AG04450 (cell line): ENCODE measurements at regions of chr1 and their contacts with region 1.

Region 1: DNA sequence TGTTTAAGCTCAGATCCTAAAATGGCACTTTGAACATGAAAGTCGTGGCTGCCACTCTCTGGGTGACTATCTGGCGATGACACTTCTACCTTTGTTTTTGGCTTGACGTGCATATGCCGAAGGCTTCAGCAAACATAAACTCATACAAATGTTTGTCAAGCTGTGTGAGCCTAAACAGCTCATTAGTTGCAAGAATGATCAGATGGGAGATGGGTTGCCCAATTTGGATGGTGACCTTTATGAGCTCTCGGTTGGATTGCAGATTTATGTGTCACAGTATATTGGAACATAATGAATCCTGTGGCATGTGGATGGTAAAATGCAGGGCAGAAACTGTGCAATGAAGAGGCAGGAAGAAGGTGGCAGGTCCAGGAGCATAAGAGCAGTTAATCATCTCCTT is 229.3 kb downstream of the DISC1 start:
- DNase-seq: no peak
- H3K4me3 ChIP-seq: no peak overlapping the region
- H3K27ac ChIP-seq: no peak overlapping the region
- H3K27me3 ChIP-seq: no peaks in the 10 kb centered on the region
- CTCF ChIP-seq: no peak

Region 2: DNA sequence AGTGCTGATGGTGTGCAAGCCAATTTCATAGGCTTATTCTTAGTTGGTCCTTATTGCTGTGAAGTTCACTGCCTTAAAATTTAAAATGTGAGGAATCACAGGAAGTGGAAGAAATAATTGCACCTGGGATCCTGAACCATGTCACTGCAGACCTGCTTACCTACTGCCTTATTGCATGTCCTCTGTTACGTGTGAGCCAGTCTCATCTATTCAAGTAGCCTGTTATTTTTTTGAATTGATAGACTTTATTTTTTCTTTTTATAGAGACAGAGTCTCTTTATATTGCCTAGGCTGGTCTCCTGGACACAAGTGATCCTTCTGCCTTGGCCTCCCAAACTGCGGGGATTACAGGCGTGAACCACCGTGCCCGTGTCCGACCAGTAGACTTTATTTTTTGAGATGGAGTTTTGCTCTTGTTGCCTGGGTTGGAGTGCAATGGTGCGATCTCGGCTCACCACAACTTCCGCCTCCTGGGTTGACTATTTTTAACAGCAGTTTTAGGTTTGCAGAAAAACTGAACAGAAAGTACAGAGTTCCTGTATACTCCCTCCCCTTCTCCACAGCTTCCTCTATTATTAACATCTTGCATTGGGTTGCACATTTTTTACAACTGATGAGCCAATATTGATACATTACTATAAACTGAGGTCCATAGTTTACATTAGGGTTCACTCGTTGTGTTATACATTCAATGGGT is 243.4 kb before region 1 on chr1:
- CTCF ChIA-PET with region 1: no interaction called
- POLR2A ChIA-PET with region 1: no interaction called
- DNase-seq: no peak
- H3K4me3 ChIP-seq: no peak overlapping the region
- H3K27ac ChIP-seq: no peak overlapping the region
- H3K27me3 ChIP-seq: peaks cover 3% of the 10 kb centered on the region
- CTCF ChIP-seq: no peak

Region 3: DNA sequence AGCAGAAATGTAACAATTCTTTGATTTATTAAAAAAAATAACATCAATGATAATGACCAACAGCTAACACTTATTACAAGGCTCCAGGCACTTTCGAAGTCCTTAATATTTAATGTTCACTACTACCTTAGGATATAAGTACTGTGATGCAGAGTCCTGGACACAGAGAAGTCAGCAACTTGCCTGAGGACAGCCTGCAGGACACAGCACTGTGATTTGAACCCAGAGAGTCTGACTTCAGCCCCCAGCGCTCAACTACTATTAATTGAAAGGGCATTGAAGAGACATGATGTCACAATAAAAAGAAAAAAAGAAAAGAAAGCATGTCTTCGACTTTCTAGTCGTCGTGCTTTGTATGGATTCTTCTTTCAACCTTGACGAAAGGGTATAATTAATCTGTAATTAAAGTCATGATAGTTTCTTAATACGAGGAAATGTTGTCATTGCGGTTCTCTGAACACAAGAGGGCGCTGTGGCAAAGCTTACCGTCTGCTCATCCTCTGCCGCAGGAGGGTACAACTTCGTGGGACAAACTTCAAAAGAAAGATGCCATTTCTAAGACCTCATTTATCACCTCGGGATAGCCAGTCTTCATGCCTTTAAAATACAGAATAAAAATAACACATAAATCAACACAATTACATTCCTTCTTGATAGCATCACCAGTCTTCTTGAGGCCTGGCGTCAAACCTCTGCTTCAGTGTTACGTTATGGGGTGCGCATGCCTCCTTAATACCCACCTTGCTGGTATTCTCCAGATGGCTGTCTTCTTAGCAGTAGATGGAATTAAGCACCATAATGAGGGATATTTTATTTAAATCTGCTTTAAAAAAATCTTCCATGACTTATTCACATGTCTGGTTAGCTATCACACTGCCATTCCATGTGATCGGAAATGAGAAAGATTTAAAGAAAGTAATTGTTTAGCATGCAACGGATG is 10.7 kb after region 1 on chr1:
- CTCF ChIA-PET with region 1: interaction called, 10 read pairs
- POLR2A ChIA-PET with region 1: no interaction called
- DNase-seq: no peak
- H3K4me3 ChIP-seq: no peak overlapping the region
- H3K27ac ChIP-seq: no peak overlapping the region
- H3K27me3 ChIP-seq: no peaks in the 10 kb centered on the region
- CTCF ChIP-seq: peak; percentile 79

Region 4: DNA sequence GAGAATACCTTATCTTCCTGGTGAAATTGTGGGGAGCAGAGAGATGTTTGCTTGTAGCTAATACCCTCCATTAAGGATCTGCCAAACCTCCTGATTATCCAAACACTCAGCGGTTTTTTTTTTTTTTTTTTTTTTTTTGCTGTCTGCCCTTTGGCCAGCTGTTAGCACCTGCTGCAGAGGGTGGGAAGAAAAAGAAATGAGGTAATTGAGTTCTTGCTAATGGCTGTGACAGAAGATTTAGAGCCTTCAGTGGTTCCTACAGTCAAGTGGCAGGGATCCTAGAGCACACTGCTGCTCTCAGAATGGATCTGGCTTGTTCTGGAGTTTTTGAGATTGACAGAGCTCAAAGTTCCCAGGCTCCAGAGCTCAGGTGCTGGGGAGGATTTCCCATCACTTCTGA is 113.1 kb after region 1 on chr1:
- CTCF ChIA-PET with region 1: no interaction called
- POLR2A ChIA-PET with region 1: no interaction called
- DNase-seq: no peak
- H3K4me3 ChIP-seq: no peak overlapping the region
- H3K27ac ChIP-seq: no peak overlapping the region
- H3K27me3 ChIP-seq: no peaks in the 10 kb centered on the region
- CTCF ChIP-seq: no peak

Region 5: DNA sequence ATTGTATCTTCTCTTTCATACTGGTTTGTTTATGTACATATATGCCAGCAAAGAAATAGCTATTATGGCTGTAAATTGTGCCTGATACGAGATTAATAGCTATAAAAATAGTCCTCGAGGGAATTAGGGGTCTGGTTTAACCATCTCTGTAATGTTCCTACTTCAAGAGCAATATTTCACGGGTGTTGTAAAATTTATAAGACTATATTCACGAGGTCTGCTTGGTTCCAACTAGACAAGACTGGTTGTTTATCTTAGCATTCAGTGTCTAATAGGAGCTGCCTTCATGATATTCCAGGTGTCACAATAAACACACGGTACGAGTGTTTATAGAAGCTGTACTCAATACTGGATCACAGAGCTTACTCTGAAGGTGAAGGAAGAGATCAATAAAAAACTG is 384.1 kb after region 1 on chr1:
- CTCF ChIA-PET with region 1: no interaction called
- POLR2A ChIA-PET with region 1: no interaction called
- DNase-seq: no peak
- H3K4me3 ChIP-seq: no peak overlapping the region
- H3K27ac ChIP-seq: no peak overlapping the region
- H3K27me3 ChIP-seq: peaks cover 5% of the 10 kb centered on the region
- CTCF ChIP-seq: no peak